Naive thymus-derived CD4-positive, alpha-beta T cell (primary cell): ENCODE measurements at regions of chr5 and their contacts with region 1.

Region 1: DNA sequence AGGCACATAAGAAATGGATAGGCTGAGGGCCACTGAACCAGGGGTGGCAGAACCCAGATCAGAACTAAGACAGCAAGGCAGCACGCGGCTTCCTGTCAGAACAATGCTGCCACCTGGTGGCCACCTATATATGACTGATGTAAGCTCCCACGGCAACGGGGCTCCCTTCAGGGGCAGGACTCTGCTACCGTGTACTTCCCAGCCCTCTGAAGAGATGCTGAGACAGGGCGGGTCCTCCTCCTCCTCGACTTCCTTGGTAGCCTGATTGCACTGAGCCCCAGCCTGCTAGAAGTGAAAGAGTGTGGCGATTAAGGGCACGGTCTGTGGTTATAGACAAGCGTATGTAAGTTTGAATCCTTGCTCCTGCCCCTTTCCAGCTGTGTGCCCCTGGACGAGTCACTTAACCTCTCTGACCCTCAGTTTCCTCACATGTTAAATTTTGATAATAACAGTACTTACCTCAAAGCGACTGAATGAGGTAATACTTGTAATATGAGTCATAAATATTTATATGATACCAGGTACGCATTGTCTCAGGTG is 13.3 kb downstream of the RPS14 start:
- DNase-seq: peak; percentile 74 to 89 (median 86)
- ATAC-seq: peak; percentile 99
- H3K4me3 ChIP-seq: no peak overlapping the region
- H3K4me3 Mint-ChIP-seq: peak overlapping the region in 6 of 10 donors; percentile 29 to 61 (median 56)
- H3K27ac ChIP-seq: peak overlapping the region; percentile 12
- H3K27ac Mint-ChIP-seq: peak overlapping the region; percentile 53 to 94 (median 72)
- H3K4me1 ChIP-seq: peaks cover 0 to 7% of the 10 kb centered on the region in 2 donors
- H3K4me1 Mint-ChIP-seq: peaks cover 6 to 11% (median 7%) of the 10 kb centered on the region in 7 donors
- H3K27me3 ChIP-seq: no peaks in the 10 kb centered on the region
- H3K27me3 Mint-ChIP-seq: no peaks in the 10 kb centered on the region

Region 2: GRCh38 chr5:150129813-150130492 is 306.3 kb before region 1 on chr5:
- CTCF ChIA-PET with region 1: no interaction called
- POLR2A ChIA-PET with region 1: no interaction called
- intact Hi-C with region 1: loop called in 1 of 2 experiments (anchors 1 kb)
- DNase-seq: peak in 7 of 9 donors; percentile 6 to 55 (median 19)
- ATAC-seq: peak; percentile 75
- H3K4me3 ChIP-seq: no peak overlapping the region
- H3K4me3 Mint-ChIP-seq: no peak overlapping the region
- H3K27ac ChIP-seq: no peak overlapping the region
- H3K27ac Mint-ChIP-seq: peak overlapping the region in 1 of 9 donors; percentile 55
- H3K4me1 ChIP-seq: no peaks in the 10 kb centered on the region
- H3K4me1 Mint-ChIP-seq: peaks cover 0 to 10% (median 0%) of the 10 kb centered on the region in 7 donors
- H3K27me3 ChIP-seq: no peaks in the 10 kb centered on the region
- H3K27me3 Mint-ChIP-seq: peaks cover 0 to 3% (median 0%) of the 10 kb centered on the region in 5 donors

Region 3: GRCh38 chr5:150224483-150225027 is 211.7 kb before region 1 on chr5:
- CTCF ChIA-PET with region 1: no interaction called
- POLR2A ChIA-PET with region 1: no interaction called
- intact Hi-C with region 1: no loop called
- DNase-seq: no peak
- ATAC-seq: no peak
- H3K4me3 ChIP-seq: no peak overlapping the region
- H3K4me3 Mint-ChIP-seq: no peak overlapping the region
- H3K27ac ChIP-seq: no peak overlapping the region
- H3K27ac Mint-ChIP-seq: peak overlapping the region in 1 of 9 donors; percentile 72
- H3K4me1 ChIP-seq: no peaks in the 10 kb centered on the region
- H3K4me1 Mint-ChIP-seq: no peaks in the 10 kb centered on the region
- H3K27me3 ChIP-seq: no peaks in the 10 kb centered on the region
- H3K27me3 Mint-ChIP-seq: peaks cover 0 to 4% (median 0%) of the 10 kb centered on the region in 5 donors

Region 4: GRCh38 chr5:150272526-150272925 is 163.7 kb before region 1 on chr5:
- CTCF ChIA-PET with region 1: no interaction called
- POLR2A ChIA-PET with region 1: no interaction called
- intact Hi-C with region 1: loop called (anchors 1 to 10 kb)
- DNase-seq: no peak
- ATAC-seq: no peak
- H3K4me3 ChIP-seq: no peak overlapping the region
- H3K4me3 Mint-ChIP-seq: no peak overlapping the region
- H3K27ac ChIP-seq: no peak overlapping the region
- H3K27ac Mint-ChIP-seq: no peak overlapping the region
- H3K4me1 ChIP-seq: no peaks in the 10 kb centered on the region
- H3K4me1 Mint-ChIP-seq: no peaks in the 10 kb centered on the region
- H3K27me3 ChIP-seq: no peaks in the 10 kb centered on the region
- H3K27me3 Mint-ChIP-seq: peaks cover 0 to 14% (median 0%) of the 10 kb centered on the region in 5 donors

Region 5: GRCh38 chr5:150295172-150295634 is 141.0 kb before region 1 on chr5:
- CTCF ChIA-PET with region 1: no interaction called
- POLR2A ChIA-PET with region 1: no interaction called
- intact Hi-C with region 1: no loop called
- DNase-seq: no peak
- ATAC-seq: no peak
- H3K4me3 ChIP-seq: no peak overlapping the region
- H3K4me3 Mint-ChIP-seq: no peak overlapping the region
- H3K27ac ChIP-seq: no peak overlapping the region
- H3K27ac Mint-ChIP-seq: no peak overlapping the region
- H3K4me1 ChIP-seq: no peaks in the 10 kb centered on the region
- H3K4me1 Mint-ChIP-seq: no peaks in the 10 kb centered on the region
- H3K27me3 ChIP-seq: no peaks in the 10 kb centered on the region
- H3K27me3 Mint-ChIP-seq: peaks cover 5 to 10% (median 7%) of the 10 kb centered on the region in 5 donors

Region 6: DNA sequence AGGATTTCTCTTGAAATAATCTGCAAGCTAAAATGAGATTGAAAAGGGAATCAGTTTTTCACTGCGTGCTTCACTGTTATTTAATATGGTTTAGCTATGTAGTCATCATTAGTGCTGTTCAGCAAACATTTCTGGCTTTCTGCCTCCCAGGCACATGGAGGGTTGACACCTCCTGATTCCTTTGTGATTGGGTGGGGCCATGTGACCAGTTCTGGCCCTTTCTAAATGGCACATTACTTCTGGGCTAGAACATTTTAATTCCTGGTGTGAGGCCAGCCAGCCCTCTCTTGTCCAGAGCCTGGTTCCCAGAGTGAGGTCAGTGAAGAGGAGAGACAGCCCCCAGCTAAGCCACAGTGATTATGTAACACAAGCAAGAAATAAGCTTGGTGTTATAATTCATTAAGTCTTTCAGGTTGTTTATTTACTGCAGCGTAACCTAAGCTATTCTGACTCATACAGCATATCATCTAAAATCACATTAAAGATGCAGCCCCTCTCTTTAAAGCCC is 116.1 kb before region 1 on chr5:
- CTCF ChIA-PET with region 1: no interaction called
- POLR2A ChIA-PET with region 1: no interaction called
- intact Hi-C with region 1: no loop called
- DNase-seq: no peak
- ATAC-seq: no peak
- H3K4me3 ChIP-seq: no peak overlapping the region
- H3K4me3 Mint-ChIP-seq: no peak overlapping the region
- H3K27ac ChIP-seq: no peak overlapping the region
- H3K27ac Mint-ChIP-seq: no peak overlapping the region
- H3K4me1 ChIP-seq: peaks cover 0 to 5% of the 10 kb centered on the region in 2 donors
- H3K4me1 Mint-ChIP-seq: peaks cover 0 to 6% (median 0%) of the 10 kb centered on the region in 7 donors
- H3K27me3 ChIP-seq: no peaks in the 10 kb centered on the region
- H3K27me3 Mint-ChIP-seq: peaks cover 0 to 5% (median 0%) of the 10 kb centered on the region in 5 donors

Region 7: GRCh38 chr5:150398722-150399523 is 37.3 kb before region 1 on chr5:
- CTCF ChIA-PET with region 1: interaction called, 3 read pairs
- POLR2A ChIA-PET with region 1: interaction called, 3 read pairs
- intact Hi-C with region 1: loop called (anchors 1 kb)
- DNase-seq: no peak
- ATAC-seq: peak; percentile 36
- H3K4me3 ChIP-seq: no peak overlapping the region
- H3K4me3 Mint-ChIP-seq: no peak overlapping the region
- H3K27ac ChIP-seq: no peak overlapping the region
- H3K27ac Mint-ChIP-seq: peak overlapping the region in 4 of 9 donors; percentile 6 to 83 (median 20)
- H3K4me1 ChIP-seq: peaks cover 0 to 3% of the 10 kb centered on the region in 2 donors
- H3K4me1 Mint-ChIP-seq: peaks cover 0 to 6% (median 5%) of the 10 kb centered on the region in 7 donors
- H3K27me3 ChIP-seq: no peaks in the 10 kb centered on the region
- H3K27me3 Mint-ChIP-seq: no peaks in the 10 kb centered on the region